ENCODE measurements at regions of chr17 and their contacts with region 1.

Region 1: GRCh38 chr17:40340880-40341807 is 23.4 kb downstream of the GJD3 start:
- DNase-seq: peak; percentile 73
- H3K4me3 ChIP-seq: peak overlapping the region; percentile 65 to 76 (median 69)
- H3K27ac ChIP-seq: peak overlapping the region; percentile 88
- H3K4me1 ChIP-seq: peaks cover 36% of the 10 kb centered on the region
- H3K27me3 ChIP-seq: no peaks in the 10 kb centered on the region
- CTCF ChIP-seq: no peak
- POLR2A ChIP-seq: peak; percentile 53

Region 2: DNA sequence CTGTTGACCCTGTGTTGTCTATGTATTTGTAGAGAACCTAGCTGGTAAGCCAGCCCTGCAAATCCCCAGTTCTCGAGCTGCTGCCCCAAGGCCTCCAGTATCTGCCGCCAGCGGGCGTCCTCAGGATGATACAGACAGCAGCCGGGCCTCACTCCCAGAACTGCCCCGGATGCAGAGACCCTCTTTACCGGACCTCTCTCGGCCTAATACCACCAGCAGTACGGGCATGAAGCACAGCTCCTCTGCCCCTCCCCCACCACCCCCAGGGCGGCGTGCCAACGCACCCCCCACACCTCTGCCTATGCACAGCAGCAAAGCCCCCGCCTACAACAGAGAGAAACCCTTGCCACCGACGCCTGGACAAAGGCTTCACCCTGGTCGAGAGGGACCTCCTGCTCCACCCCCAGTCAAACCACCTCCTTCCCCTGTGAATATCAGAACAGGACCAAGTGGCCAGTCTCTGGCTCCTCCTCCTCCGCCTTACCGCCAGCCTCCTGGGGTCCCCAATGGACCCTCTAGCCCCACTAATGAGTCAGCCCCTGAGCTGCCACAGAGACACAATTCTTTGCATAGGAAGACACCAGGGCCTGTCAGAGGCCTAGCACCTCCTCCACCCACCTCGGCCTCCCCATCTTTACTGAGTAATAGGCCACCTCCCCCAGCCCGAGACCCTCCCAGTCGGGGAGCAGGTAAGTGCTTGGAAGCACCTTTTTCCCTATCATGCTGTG is 76.5 kb before region 1 on chr17:
- CTCF ChIA-PET with region 1: no interaction called
- POLR2A ChIA-PET with region 1: no interaction called
- dilution Hi-C with region 1: no loop called
- intact Hi-C with region 1: no loop called
- DNase-seq: no peak
- H3K4me3 ChIP-seq: no peak overlapping the region
- H3K27ac ChIP-seq: no peak overlapping the region
- H3K4me1 ChIP-seq: no peaks in the 10 kb centered on the region
- H3K27me3 ChIP-seq: no peaks in the 10 kb centered on the region
- CTCF ChIP-seq: no peak
- POLR2A ChIP-seq: no peak

Region 3: DNA sequence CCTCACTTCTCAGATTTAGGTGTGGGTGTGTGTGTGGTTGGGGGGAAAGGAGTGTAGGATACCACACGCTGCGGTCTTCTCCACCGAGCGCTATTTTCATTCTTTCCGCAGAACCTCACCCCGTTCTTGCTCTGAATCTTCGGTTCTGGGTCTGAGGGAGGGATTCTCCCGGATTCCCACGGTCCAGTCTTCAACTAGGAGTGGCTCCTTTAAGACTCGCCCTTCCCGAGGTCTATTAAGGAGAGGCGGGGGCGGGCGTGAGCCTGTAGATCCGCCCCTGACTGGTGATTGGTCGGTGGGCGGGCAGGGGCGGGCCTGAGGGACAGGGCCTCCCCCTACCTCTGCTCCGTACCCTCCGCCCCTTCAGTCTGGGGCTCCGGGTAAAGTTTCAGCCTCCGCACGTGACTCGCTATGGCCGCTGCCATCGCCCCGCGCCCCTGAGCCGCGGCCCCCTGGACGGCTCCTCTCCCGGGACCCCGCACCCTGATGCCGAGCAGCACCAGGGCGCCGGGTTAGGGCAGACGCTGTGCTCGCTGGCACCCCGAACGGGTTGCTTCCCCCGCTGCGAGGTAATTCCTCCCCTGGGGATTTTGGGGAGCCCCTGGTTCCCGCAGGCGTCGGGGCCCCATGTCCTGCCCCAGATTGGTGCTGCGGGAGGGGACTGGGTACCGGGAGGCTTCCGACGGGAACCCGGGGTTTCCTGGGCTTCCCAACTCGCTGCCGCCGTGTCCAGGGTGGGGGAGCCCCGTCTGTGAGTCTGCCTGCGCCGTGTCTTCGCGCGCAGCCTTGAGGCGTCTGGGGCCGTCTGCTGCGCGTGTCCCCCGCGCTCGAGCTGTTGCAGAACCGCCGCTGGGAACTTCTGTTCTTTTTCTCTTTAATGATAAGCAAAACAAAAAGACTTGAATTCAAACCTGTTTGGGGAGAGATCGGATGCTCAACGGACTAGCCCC is 23.0 kb before region 1 on chr17:
- CTCF ChIA-PET with region 1: interaction called, 109 read pairs
- POLR2A ChIA-PET with region 1: interaction called, 6 read pairs
- dilution Hi-C with region 1: no loop called
- intact Hi-C with region 1: loop called (anchors 1 kb)
- DNase-seq: peak; percentile 96
- H3K4me3 ChIP-seq: peak overlapping the region; percentile 63 to 66 (median 65)
- H3K27ac ChIP-seq: peak overlapping the region; percentile 83
- H3K4me1 ChIP-seq: peaks cover 72% of the 10 kb centered on the region
- H3K27me3 ChIP-seq: no peaks in the 10 kb centered on the region
- CTCF ChIP-seq: no peak
- POLR2A ChIP-seq: peak; percentile 75

Region 4: DNA sequence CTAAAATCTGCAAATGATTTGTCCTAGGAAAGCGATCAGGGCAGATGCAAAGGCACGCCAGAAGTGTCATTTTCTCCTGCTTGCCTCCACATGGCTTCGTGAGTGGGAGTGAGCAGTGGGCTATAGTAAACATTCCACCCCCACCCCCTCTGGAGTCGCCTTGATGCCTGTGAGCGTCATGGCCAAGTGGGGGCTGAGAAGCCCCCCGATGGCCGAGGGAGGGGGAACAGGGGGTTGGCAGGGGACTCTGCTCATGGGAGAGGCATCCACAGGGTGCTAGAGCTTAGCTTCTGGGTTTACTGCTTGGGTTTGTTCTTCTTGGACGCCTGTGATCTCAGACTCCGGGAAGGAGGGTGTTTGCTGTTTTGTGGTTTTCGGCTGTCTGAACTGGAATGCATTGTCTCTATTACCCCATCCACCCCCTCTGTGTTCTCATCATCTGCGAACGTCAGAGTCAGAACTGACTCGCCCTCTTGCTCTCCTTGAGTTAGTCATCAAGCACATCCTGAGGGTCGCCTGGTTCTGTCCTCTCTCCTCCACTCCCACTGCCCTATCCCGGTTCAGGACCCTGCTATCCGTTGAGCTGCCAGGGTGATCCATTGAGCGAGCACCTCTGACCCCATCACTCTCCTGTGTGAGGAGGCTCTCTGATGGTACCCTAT is 144.8 kb after region 1 on chr17:
- CTCF ChIA-PET with region 1: no interaction called
- POLR2A ChIA-PET with region 1: no interaction called
- dilution Hi-C with region 1: no loop called
- intact Hi-C with region 1: no loop called
- DNase-seq: no peak
- H3K4me3 ChIP-seq: no peak overlapping the region
- H3K27ac ChIP-seq: no peak overlapping the region
- H3K4me1 ChIP-seq: no peaks in the 10 kb centered on the region
- H3K27me3 ChIP-seq: peaks cover 2 to 8% of the 10 kb centered on the region in 2 experiments
- CTCF ChIP-seq: no peak
- POLR2A ChIP-seq: no peak

Region 5: GRCh38 chr17:40903129-40904065 is 562.3 kb after region 1 on chr17:
- CTCF ChIA-PET with region 1: no interaction called
- POLR2A ChIA-PET with region 1: no interaction called
- dilution Hi-C with region 1: no loop called
- intact Hi-C with region 1: no loop called
- DNase-seq: no peak
- H3K4me3 ChIP-seq: no peak overlapping the region
- H3K27ac ChIP-seq: no peak overlapping the region
- H3K4me1 ChIP-seq: no peaks in the 10 kb centered on the region
- H3K27me3 ChIP-seq: peaks cover 0 to 4% of the 10 kb centered on the region in 2 experiments
- CTCF ChIP-seq: no peak
- POLR2A ChIP-seq: no peak

Measured in endothelial cell of umbilical vein (primary cell).